Dorsolateral prefrontal cortex (tissue), 120 donors: ENCODE measurements at regions of chr6 and their contacts with region 1.

Region 1: GRCh38 chr6:145734486-145735355 is 599 bp downstream of the EPM2A start:
- DNase-seq: peak; percentile 69 to 89 (median 82)
- H3K4me3 ChIP-seq: peak overlapping the region; percentile 58 to 89 (median 81)
- H3K27ac ChIP-seq: peak overlapping the region; percentile 72 to 98 (median 94)
- H3K27me3 ChIP-seq: no peaks in the 10 kb centered on the region
- CTCF ChIP-seq: peak in 7 of 56 donors; percentile 9 to 22 (median 16)

Region 2: GRCh38 chr6:145814501-145815308 is 80.0 kb after region 1 on chr6 and contains the start of gene FBXO30:
- intact Hi-C with region 1: loop called (anchors 1 kb)
- DNase-seq: peak; percentile 75 to 95 (median 87)
- H3K4me3 ChIP-seq: peak within 1 kb of the TSS; percentile 54 to 97 (median 84)
- H3K27ac ChIP-seq: peak within 1 kb of the TSS; percentile 51 to 97 (median 90)
- H3K27me3 ChIP-seq: no peaks in the 10 kb centered on the region
- CTCF ChIP-seq: peak in 39 of 56 donors; percentile 8 to 52 (median 30)
- total RNA-seq, gene FBXO30: 9.7 to 17.6 (median 13.0) TPM